ENCODE measurements at regions of chr2 and their contacts with region 1.

Region 1: GRCh38 chr2:186460465-186460864 is 25.6 kb upstream of the ZC3H15 start:
- DNase-seq: no peak
- H3K4me3 ChIP-seq: no peak overlapping the region
- H3K27ac ChIP-seq: no peak overlapping the region
- H3K4me1 ChIP-seq: no peaks in the 10 kb centered on the region
- H3K27me3 ChIP-seq: no peaks in the 10 kb centered on the region
- CTCF ChIP-seq: peak in 2 of 3 experiments; percentile 33 to 51; a peak in 2 of 4 replicates
- EP300 ChIP-seq: no peak
- POLR2A ChIP-seq: no peak
- RAD21 ChIP-seq: peak; percentile 76 to 78

Region 2: DNA sequence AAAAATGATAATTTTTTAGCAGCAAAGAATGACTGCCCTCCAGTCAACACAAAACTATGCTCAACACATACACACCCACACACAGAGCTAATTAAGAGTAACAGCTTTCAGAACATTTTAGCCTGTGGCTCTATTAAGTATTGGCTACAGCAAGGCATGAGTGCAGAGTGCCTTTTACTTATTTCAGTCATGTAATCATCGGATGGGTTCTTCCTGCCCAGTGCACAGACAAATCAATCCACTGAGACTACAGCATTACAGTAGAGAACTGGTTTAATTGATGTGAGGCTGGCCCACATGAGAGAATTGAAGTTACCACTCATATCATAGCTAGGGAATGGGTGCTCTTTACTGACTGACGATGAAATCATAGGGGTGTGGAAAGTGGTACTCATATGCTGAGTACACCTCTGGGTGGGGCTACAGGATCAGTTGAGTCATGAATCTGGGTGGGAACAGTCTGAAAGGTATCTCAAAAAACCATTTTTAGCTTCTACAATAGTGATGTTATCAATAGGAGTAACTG is 480.9 kb before region 1 on chr2:
- CTCF ChIA-PET with region 1: interaction called, 13 read pairs
- POLR2A ChIA-PET with region 1: interaction called, 5 read pairs
- DNase-seq: no peak
- H3K4me3 ChIP-seq: no peak overlapping the region
- H3K27ac ChIP-seq: no peak overlapping the region
- H3K4me1 ChIP-seq: peaks cover 0 to 2% (median 0%) of the 10 kb centered on the region in 4 experiments; a peak in 1 of 7 replicates
- H3K27me3 ChIP-seq: no peaks in the 10 kb centered on the region
- CTCF ChIP-seq: peak in 2 of 3 experiments; percentile 28 to 43; a peak in 2 of 4 replicates
- EP300 ChIP-seq: no peak
- POLR2A ChIP-seq: no peak
- RAD21 ChIP-seq: peak; percentile 73 to 76

Measured in H1 (cell line).